Right ventricle myocardium inferior (tissue), 1 donor: ENCODE measurements at regions of chr6 and their contacts with region 1.

Region 1: DNA sequence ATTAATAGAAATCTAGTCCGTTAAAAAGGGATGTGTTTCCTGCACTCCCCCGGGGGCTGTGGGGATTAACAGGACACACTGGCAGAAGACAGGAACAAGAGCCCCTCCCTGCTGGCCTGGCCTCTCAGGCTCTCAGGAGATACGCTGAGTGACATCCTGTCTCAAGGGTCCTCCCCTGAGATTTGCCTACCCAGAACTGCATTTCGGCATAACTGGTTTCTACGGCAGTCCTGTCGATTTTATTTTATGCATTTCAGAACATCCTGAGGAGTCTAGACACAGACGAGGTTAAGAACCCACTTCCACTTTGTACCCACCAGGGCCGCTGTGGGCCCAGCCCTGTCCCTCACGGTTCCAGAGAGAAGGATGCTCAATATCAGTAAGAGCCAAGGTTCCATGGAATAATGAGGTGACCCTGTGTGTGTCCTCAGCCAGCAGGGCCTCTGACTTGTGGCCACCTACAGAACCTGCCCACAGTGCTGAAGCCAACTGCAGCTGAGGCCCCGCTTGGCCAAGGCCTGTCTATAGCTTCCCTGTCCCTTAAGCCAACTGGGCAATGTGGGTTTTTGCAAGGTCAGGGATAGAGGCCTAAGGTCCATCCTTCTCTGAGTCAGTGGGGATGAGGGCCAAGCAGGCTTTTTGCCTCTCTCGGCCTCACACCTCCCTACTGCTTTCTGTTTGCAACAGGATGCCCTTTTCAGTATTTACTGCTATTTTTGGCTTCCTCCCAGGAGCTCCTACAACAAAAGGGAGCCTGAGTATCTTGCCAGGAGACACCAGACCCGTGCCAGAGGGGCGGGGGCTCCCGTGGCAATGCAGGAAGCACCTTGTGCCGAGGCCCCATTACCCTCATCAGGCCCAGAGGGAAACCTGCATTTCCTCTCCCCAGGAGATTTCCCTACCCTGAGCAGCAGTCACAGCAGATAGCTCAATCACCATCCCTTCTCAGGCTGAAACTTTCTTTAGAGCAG is 14.7 kb downstream of the UQCC2 start:
- DNase-seq: no peak
- ATAC-seq: peak; percentile 15

Region 2: DNA sequence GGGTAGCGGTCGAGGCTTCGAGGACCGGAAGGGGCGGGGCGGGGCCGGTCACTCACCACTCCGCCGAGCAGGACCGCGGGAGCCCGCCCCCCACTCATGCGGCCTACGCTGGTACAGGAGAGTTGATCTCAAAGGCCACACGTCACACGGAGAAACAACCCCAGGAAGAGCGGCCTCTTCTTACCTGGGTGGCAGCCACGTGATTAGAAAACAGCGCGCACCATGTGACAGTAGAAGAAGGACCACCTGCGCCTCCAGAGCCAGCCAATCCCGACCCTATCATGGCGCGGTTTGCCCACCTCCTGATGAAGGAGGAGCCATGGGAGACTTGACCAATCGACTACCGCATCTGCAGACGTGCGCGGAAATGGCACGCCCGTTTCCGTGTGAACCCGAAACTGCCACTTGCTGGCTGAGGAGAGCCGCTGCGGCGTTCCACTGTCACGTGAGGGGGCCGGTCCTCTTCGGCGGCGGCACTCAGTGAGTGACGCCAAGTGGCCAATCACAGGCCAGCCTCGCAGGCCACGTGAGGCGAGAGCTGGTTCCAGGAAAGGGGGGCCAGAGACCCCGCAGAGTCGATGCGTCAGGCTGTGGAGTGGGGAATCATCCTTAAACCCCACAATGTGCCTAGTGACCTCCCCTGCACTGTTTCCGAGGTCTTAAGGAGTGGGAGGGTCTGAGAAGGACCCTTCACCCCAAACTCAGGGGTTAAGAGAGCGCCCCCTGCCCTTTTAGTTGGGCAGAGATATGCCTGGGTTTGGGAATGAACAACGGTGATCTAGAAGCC is 278.7 kb before region 1 on chr6 and contains the start of gene CUTA:
- intact Hi-C with region 1: loop called (anchors 10 kb)
- DNase-seq: peak; percentile 99
- ATAC-seq: peak; percentile 95
- total RNA-seq, gene CUTA: 107 TPM

Region 3: GRCh38 chr6:33633462-33634158 is 63.2 kb before region 1 on chr6:
- intact Hi-C with region 1: loop called (anchors 5 kb)
- DNase-seq: peak; percentile 86
- ATAC-seq: peak; percentile 85